WTC11 (cell line): ENCODE measurements at regions of chr11 and their contacts with region 1.

Region 1: GRCh38 chr11:64348611-64349484 is 8.8 kb downstream of the CCDC88B start:
- DNase-seq: no peak
- ATAC-seq: peak; percentile 27
- H3K4me3 Mint-ChIP-seq: no peak overlapping the region
- H3K27ac Mint-ChIP-seq: no peak overlapping the region
- H3K4me1 Mint-ChIP-seq: peaks cover 5% of the 10 kb centered on the region; the same call in 1 of the 2 replicates
- H3K27me3 Mint-ChIP-seq: no peaks in the 10 kb centered on the region
- CTCF ChIP-seq: no peak

Region 2: GRCh38 chr11:64331557-64332371 is 17.1 kb before region 1 on chr11:
- CTCF ChIA-PET with region 1: interaction called, 437 read pairs
- POLR2A ChIA-PET with region 1: interaction called, 4 read pairs
- DNase-seq: peak; percentile 65
- ATAC-seq: peak; percentile 79
- H3K4me3 Mint-ChIP-seq: no peak overlapping the region
- H3K27ac Mint-ChIP-seq: peak overlapping the region; percentile 11
- H3K4me1 Mint-ChIP-seq: peaks cover 10% of the 10 kb centered on the region
- H3K27me3 Mint-ChIP-seq: peaks cover 12% of the 10 kb centered on the region; the same call in 1 of the 2 replicates
- CTCF ChIP-seq: no peak